Natural killer cell (primary cell): ENCODE measurements at regions of chr6 and their contacts with region 1.

Region 1: DNA sequence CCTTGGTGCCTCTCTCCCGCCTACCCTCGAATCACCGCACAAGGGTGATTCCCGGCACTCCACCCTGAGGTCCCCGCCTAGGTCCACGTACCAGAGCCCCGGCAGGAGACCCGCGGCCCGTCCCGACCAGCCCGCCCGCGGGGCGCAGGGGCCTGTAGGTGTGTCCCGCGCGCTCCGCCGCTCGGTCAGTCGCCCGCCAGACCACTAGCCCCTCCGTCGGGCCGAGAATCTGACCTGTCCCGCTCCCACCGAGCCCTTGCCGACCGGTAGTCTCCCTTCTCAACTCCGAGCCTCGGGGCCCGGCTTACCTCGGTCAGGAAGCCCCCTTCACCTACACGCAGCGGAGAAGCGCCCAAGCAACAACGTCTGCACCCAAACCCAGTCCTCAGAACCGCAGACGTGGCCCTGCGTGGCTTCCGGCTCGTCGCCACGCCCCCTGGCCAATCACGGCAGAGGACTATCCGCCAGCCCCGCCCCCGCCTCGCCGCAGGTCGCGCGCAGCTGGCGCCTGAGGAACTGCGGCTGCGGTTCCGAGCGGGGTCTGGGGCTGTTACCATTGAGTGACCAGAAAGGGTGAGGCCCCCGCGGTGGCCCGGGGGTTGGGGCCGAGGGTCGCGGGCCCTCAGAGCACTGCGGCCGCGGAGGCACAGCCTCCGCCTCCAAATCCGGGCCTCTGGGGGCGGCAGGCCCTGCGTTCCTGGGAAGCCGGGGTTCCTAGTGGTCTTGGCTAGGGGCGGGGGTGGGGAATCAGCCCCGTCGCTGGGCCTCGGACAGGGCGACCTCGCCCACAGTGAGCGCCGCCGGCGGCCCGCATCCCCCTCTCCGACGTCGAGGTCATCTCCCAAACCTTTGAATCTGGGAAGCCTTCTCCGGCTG is at the starts of genes PGM3 and RWDD2A:
- DNase-seq: peak; percentile 90 to 95
- ATAC-seq: peak; percentile 97 to 98 (median 97)
- H3K4me3 ChIP-seq: peak within 1 kb of the TSS; percentile 73
- H3K4me3 Mint-ChIP-seq: peak within 1 kb of the TSS; percentile 99
- H3K27ac ChIP-seq: peak within 1 kb of the TSS; percentile 48
- H3K27ac Mint-ChIP-seq: peak within 1 kb of the TSS; percentile 90 to 99
- H3K4me1 ChIP-seq: peaks cover 19% of the 10 kb centered on the region
- H3K4me1 Mint-ChIP-seq: peaks cover 18 to 20% of the 10 kb centered on the region in 2 donors
- H3K27me3 ChIP-seq: no peaks in the 10 kb centered on the region
- H3K27me3 Mint-ChIP-seq: no peaks in the 10 kb centered on the region
- CTCF ChIP-seq: no peak
- total RNA-seq, gene PGM3: 16.6 to 26.4 (median 17.2) TPM
- total RNA-seq, gene RWDD2A: 0.86 to 1.1 (median 0.93) TPM

Region 2: GRCh38 chr6:82247634-82248232 is 945.4 kb before region 1 on chr6 and contains the start of gene IBTK:
- intact Hi-C with region 1: loop called (anchors 1 kb)
- DNase-seq: peak; percentile 92 to 94
- ATAC-seq: peak; percentile 89 to 94 (median 93)
- H3K4me3 ChIP-seq: peak within 1 kb of the TSS; percentile 73
- H3K4me3 Mint-ChIP-seq: peak within 1 kb of the TSS; percentile 97
- H3K27ac ChIP-seq: peak within 1 kb of the TSS; percentile 70
- H3K27ac Mint-ChIP-seq: peak within 1 kb of the TSS; percentile 94 to 97
- H3K4me1 ChIP-seq: peaks cover 18% of the 10 kb centered on the region
- H3K4me1 Mint-ChIP-seq: peaks cover 32 to 40% of the 10 kb centered on the region in 2 donors
- H3K27me3 ChIP-seq: no peaks in the 10 kb centered on the region
- H3K27me3 Mint-ChIP-seq: no peaks in the 10 kb centered on the region
- CTCF ChIP-seq: no peak
- total RNA-seq, gene IBTK: 18.3 to 23.5 (median 22.2) TPM

Region 3: DNA sequence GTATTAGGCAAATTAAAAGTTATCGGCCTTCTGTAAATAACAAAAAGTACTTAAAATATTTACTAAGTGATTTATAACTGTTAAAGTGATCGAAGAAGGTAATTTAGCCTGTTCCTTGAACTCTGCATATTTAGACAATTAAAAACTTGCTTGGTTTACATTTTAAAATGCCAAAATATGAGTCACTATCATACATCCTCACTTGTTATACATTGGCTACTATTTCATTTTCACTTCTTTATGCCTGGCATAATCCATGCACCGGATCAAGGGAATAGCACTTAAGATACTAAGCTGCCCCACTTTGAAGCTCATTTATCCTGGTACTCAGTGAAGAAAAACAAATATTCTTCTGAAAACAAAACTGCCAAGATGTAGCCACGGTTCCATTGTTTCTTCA is 472.1 kb before region 1 on chr6:
- intact Hi-C with region 1: no loop called
- DNase-seq: no peak
- ATAC-seq: no peak
- H3K4me3 ChIP-seq: no peak overlapping the region
- H3K4me3 Mint-ChIP-seq: no peak overlapping the region
- H3K27ac ChIP-seq: no peak overlapping the region
- H3K27ac Mint-ChIP-seq: no peak overlapping the region
- H3K4me1 ChIP-seq: no peaks in the 10 kb centered on the region
- H3K4me1 Mint-ChIP-seq: no peaks in the 10 kb centered on the region
- H3K27me3 ChIP-seq: no peaks in the 10 kb centered on the region
- H3K27me3 Mint-ChIP-seq: no peaks in the 10 kb centered on the region
- CTCF ChIP-seq: no peak

Region 4: GRCh38 chr6:82988904-82989303 is 204.2 kb before region 1 on chr6:
- intact Hi-C with region 1: no loop called
- DNase-seq: no peak
- ATAC-seq: no peak
- H3K4me3 ChIP-seq: no peak overlapping the region
- H3K4me3 Mint-ChIP-seq: no peak overlapping the region
- H3K27ac ChIP-seq: no peak overlapping the region
- H3K27ac Mint-ChIP-seq: no peak overlapping the region
- H3K4me1 ChIP-seq: no peaks in the 10 kb centered on the region
- H3K4me1 Mint-ChIP-seq: no peaks in the 10 kb centered on the region
- H3K27me3 ChIP-seq: no peaks in the 10 kb centered on the region
- H3K27me3 Mint-ChIP-seq: no peaks in the 10 kb centered on the region
- CTCF ChIP-seq: no peak

Region 5: GRCh38 chr6:83169511-83169910 is 23.6 kb before region 1 on chr6:
- intact Hi-C with region 1: no loop called
- DNase-seq: no peak
- ATAC-seq: no peak
- H3K4me3 ChIP-seq: no peak overlapping the region
- H3K4me3 Mint-ChIP-seq: no peak overlapping the region
- H3K27ac ChIP-seq: no peak overlapping the region
- H3K27ac Mint-ChIP-seq: peak overlapping the region in 1 of 2 donors; percentile 26
- H3K4me1 ChIP-seq: no peaks in the 10 kb centered on the region
- H3K4me1 Mint-ChIP-seq: no peaks in the 10 kb centered on the region
- H3K27me3 ChIP-seq: no peaks in the 10 kb centered on the region
- H3K27me3 Mint-ChIP-seq: no peaks in the 10 kb centered on the region
- CTCF ChIP-seq: no peak